ENCODE measurements at regions of chr16 and their contacts with region 1.

Region 1: GRCh38 chr16:69494993-69495392 is 70.6 kb downstream of the CYB5B start:
- DNase-seq: peak; percentile 55 to 72 (median 66)
- ATAC-seq: peak; percentile 90
- H3K4me3 ChIP-seq: no peak overlapping the region
- H3K27ac ChIP-seq: no peak overlapping the region
- H3K4me1 ChIP-seq: peaks cover 0 to 4% of the 10 kb centered on the region in 2 experiments; a peak in 3 of 5 replicates
- H3K27me3 ChIP-seq: no peaks in the 10 kb centered on the region
- CTCF ChIP-seq: peak; percentile 66 to 80 (median 79)
- EP300 ChIP-seq: no peak
- POLR2A ChIP-seq: no peak
- RAD21 ChIP-seq: peak in 1 of 2 experiments; percentile 68; a peak in 3 of 4 replicates

Region 2: DNA sequence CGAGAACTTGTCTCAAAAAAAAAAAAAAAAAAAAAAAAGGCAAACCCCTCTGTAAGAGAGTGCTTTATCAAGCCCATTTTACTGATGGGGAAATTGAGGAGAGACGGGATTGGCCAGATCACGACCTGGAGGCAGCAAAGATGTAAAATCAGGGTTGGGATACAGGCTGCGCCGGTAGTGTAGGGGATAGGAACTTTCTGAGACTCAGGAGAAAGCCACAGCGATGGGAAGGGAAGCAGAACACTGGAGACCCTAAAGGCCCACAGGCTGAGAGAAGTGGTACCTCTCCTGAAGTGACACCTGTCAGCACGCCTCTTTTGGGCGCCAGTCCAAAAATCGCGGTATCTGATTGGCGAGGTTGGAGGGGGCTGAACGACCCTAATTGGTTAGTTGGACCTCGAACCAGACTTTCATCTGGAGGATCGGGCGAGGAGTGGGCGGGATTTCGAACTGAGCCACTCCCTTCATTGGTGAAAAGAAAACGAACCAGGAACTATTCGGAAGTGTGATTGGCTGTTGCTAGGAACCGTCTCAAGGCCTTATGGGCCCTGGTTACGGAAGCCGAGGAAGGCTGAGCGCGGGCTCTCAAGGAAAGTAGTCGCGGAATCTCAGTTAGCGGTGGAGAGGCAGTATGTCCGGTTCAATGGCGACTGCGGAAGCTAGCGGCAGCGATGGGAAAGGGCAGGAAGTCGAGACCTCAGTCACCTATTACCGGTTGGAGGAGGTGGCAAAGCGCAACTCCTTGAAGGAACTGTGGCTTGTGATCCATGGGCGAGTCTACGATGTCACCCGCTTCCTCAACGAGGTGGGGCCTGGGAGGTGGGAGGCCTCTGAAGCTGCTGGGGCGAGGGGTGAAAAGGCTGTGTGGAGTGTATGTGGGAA is 70.7 kb before region 1 on chr16 and contains the start of gene CYB5B:
- CTCF ChIA-PET with region 1: no interaction called
- POLR2A ChIA-PET with region 1: no interaction called
- in situ Hi-C with region 1: no loop called
- intact Hi-C with region 1: no loop called
- DNase-seq: peak; percentile 87 to 98 (median 92)
- ATAC-seq: peak; percentile 99
- H3K4me3 ChIP-seq: peak within 1 kb of the TSS; percentile 77
- H3K27ac ChIP-seq: peak within 1 kb of the TSS; percentile 68
- H3K4me1 ChIP-seq: peaks cover 0 to 10% of the 10 kb centered on the region in 2 experiments; a peak in 3 of 5 replicates
- H3K27me3 ChIP-seq: no peaks in the 10 kb centered on the region
- CTCF ChIP-seq: no peak
- EP300 ChIP-seq: no peak
- POLR2A ChIP-seq: peak; percentile 95
- RAD21 ChIP-seq: no peak; a peak in 1 of 4 replicates
- polyA plus RNA-seq, gene CYB5B: 136 to 198 TPM

Region 3: DNA sequence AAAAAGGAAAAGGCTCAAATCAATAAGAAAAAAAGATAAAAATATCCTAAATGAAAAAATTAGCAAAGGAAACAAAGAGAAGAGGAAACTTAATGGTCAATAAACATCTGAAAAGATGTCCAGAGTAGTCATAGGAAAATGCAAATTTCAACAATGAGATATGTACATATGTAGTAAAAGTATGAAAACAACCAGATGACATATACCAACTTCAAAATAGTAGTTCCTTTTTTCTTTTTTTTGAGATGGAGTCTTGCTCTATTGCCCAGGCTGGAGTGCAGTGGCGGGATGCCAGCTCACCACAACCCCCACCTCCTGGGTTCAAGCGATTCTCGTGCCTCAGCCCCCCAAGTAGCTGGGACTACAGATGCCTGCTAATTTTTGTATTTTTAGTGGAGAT is 49.1 kb after region 1 on chr16:
- CTCF ChIA-PET with region 1: no interaction called
- POLR2A ChIA-PET with region 1: no interaction called
- in situ Hi-C with region 1: no loop called
- intact Hi-C with region 1: loop called (anchors 1 kb)
- DNase-seq: no peak
- ATAC-seq: no peak
- H3K4me3 ChIP-seq: no peak overlapping the region
- H3K27ac ChIP-seq: no peak overlapping the region
- H3K4me1 ChIP-seq: no peaks in the 10 kb centered on the region
- H3K27me3 ChIP-seq: no peaks in the 10 kb centered on the region
- CTCF ChIP-seq: no peak
- EP300 ChIP-seq: no peak
- POLR2A ChIP-seq: no peak
- RAD21 ChIP-seq: no peak

Measured in K562 (cell line).